PC-3 (cell line): ENCODE measurements at regions of chr6 and their contacts with region 1.

Region 1: GRCh38 chr6:109059571-109060021 is 35.0 kb downstream of the SESN1 start:
- DNase-seq: peak; percentile 29
- ATAC-seq: peak; percentile 64
- H3K4me3 ChIP-seq: no peak overlapping the region
- H3K27ac ChIP-seq: no peak overlapping the region
- H3K4me1 ChIP-seq: peaks cover 4% of the 10 kb centered on the region; the same call in 1 of the 2 replicates
- H3K27me3 ChIP-seq: no peaks in the 10 kb centered on the region
- CTCF ChIP-seq: peak; percentile 56

Region 2: DNA sequence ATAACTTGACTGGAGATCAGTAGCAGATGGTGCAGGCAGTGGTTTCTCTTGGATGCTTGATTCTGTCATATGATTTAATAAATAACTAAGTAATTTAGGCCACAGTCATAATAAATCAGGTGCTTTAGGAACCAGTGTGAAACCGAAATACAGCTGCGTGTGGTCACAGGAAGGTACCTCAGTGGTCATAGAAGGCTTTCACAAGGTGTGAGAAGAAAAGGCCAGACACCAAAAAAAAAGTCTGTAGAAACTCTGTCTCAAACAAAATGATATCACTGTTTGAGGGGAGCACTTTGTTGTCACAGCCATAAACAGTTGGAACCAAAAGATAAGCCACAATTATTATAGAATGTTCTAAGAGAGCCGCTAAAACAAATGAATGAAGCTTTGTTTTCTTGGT is 154.9 kb before region 1 on chr6:
- CTCF ChIA-PET with region 1: no interaction called
- POLR2A ChIA-PET with region 1: no interaction called
- intact Hi-C with region 1: loop called (anchors 10 kb)
- DNase-seq: no peak
- ATAC-seq: no peak
- H3K4me3 ChIP-seq: no peak overlapping the region
- H3K27ac ChIP-seq: no peak overlapping the region
- H3K4me1 ChIP-seq: peaks cover 9% of the 10 kb centered on the region
- H3K27me3 ChIP-seq: no peaks in the 10 kb centered on the region
- CTCF ChIP-seq: no peak

Region 3: GRCh38 chr6:109103942-109104341 is 44.3 kb after region 1 on chr6:
- CTCF ChIA-PET with region 1: no interaction called
- POLR2A ChIA-PET with region 1: no interaction called
- intact Hi-C with region 1: no loop called
- DNase-seq: no peak
- ATAC-seq: no peak
- H3K4me3 ChIP-seq: no peak overlapping the region
- H3K27ac ChIP-seq: no peak overlapping the region
- H3K4me1 ChIP-seq: no peaks in the 10 kb centered on the region
- H3K27me3 ChIP-seq: no peaks in the 10 kb centered on the region
- CTCF ChIP-seq: no peak

Region 4: DNA sequence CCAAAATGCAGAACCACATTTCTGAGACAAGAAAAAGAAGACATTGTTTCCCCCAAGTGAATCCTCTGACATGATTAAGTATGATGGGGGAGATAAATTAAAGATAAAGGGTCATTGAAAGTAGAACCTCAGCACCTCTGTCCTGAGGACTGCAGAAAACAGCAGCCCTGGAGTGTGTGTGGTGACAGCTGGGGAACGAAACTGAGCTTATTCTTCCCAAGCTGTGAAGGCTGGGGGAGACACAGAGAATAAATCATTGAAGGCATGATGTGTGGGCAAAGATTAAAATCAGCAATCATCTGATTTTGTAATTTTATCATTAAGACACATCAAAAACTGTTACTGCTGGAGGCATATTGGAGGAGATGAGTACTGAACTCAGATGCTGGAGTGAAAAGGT is 851.0 kb after region 1 on chr6:
- CTCF ChIA-PET with region 1: no interaction called
- POLR2A ChIA-PET with region 1: no interaction called
- intact Hi-C with region 1: no loop called
- DNase-seq: no peak
- ATAC-seq: no peak
- H3K4me3 ChIP-seq: no peak overlapping the region
- H3K27ac ChIP-seq: no peak overlapping the region
- H3K4me1 ChIP-seq: no peaks in the 10 kb centered on the region
- H3K27me3 ChIP-seq: no peaks in the 10 kb centered on the region
- CTCF ChIP-seq: no peak